ENCODE measurements at regions of chr1 and their contacts with region 1.

Region 1: GRCh38 chr1:37434292-37434907 is 40.0 kb upstream of the ZC3H12A start:
- DNase-seq: peak; percentile 66 to 85
- ATAC-seq: peak; percentile 75 to 89 (median 84)
- H3K4me3 ChIP-seq: no peak overlapping the region
- H3K27ac ChIP-seq: no peak overlapping the region
- H3K4me1 ChIP-seq: no peaks in the 10 kb centered on the region
- H3K27me3 ChIP-seq: peaks cover under 1 to 38% (median 2%) of the 10 kb centered on the region in 3 donors
- CTCF ChIP-seq: peak; percentile 89

Region 2: GRCh38 chr1:36557041-36558000 is 877.1 kb before region 1 on chr1:
- intact Hi-C with region 1: loop called in 1 of 2 experiments (anchors 5 kb)
- DNase-seq: no peak
- ATAC-seq: no peak
- H3K4me3 ChIP-seq: no peak overlapping the region
- H3K27ac ChIP-seq: no peak overlapping the region
- H3K4me1 ChIP-seq: no peaks in the 10 kb centered on the region
- H3K27me3 ChIP-seq: peaks cover 4 to 30% (median 4%) of the 10 kb centered on the region in 3 donors
- CTCF ChIP-seq: no peak

Region 3: GRCh38 chr1:36576118-36576517 is 858.3 kb before region 1 on chr1:
- intact Hi-C with region 1: loop called (anchors 1 to 10 kb)
- DNase-seq: peak; percentile 32 to 64
- ATAC-seq: peak in 3 of 4 donors; percentile 57 to 78 (median 67)
- H3K4me3 ChIP-seq: no peak overlapping the region
- H3K27ac ChIP-seq: no peak overlapping the region
- H3K4me1 ChIP-seq: no peaks in the 10 kb centered on the region
- H3K27me3 ChIP-seq: peaks cover 0 to 44% (median 9%) of the 10 kb centered on the region in 3 donors
- CTCF ChIP-seq: peak; percentile 52

Region 4: DNA sequence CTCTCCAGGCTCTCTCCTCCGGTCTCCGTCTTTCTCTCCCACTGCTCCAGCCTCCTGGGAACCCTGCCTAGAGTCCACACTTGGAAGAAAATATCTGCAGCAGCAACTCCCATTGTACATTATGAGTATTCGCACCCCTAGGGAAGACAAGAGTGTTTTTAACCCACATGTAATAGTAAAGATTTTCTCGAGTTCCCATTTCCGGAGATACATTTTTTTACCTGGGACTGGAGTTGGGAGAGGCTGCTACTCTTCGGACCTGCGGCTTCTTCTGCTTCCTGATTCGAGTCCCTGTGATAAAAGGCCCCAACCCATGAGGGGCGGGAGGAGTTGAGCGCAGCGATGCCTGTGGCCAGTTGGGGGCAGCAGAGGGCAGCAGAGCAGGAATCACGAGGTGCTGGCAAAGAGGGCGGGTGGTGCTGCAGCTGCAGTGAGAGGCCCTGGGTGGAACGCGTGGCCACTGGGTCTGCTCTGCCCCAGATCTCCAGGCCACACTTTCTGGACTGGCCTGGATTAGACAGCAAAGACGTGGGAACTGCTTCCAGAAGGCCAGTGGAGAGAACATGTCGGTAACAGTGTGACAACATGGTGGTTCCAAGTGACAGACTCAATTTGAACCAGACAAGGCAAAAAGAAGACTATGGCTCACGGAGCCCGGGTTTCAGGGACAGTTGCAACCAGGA is 730.7 kb before region 1 on chr1:
- intact Hi-C with region 1: loop called (anchors 5 kb)
- DNase-seq: peak; percentile 68 to 83
- ATAC-seq: peak; percentile 68 to 86 (median 84)
- H3K4me3 ChIP-seq: no peak overlapping the region
- H3K27ac ChIP-seq: no peak overlapping the region
- H3K4me1 ChIP-seq: no peaks in the 10 kb centered on the region
- H3K27me3 ChIP-seq: peaks cover 0 to 31% (median 3%) of the 10 kb centered on the region in 3 donors
- CTCF ChIP-seq: peak; percentile 59

Region 5: DNA sequence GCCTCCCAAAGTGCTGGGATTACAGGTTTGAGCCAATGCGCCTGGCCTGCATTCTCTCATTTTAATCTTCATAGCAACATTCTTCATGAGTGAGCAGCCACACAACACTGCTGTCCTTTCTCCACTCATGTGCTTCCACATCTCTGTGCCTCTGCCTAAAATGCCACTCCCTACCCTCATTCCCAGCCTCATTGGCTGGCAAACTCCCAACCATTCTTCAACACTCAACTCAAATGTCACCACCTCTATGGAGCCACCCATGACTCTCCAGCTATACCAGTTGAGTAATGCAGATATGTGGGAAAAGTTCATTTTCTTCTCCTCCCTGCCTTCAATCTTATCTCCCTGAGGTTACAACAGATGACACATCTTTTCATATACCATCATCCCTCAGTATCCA is 13.9 kb before region 1 on chr1:
- intact Hi-C with region 1: no loop called
- DNase-seq: no peak
- ATAC-seq: no peak
- H3K4me3 ChIP-seq: no peak overlapping the region
- H3K27ac ChIP-seq: no peak overlapping the region
- H3K4me1 ChIP-seq: no peaks in the 10 kb centered on the region
- H3K27me3 ChIP-seq: peaks cover 0 to 22% (median 7%) of the 10 kb centered on the region in 3 donors
- CTCF ChIP-seq: no peak

Region 6: GRCh38 chr1:37449936-37450335 is 15.5 kb after region 1 on chr1:
- intact Hi-C with region 1: no loop called
- DNase-seq: no peak
- ATAC-seq: no peak
- H3K4me3 ChIP-seq: no peak overlapping the region
- H3K27ac ChIP-seq: no peak overlapping the region
- H3K4me1 ChIP-seq: no peaks in the 10 kb centered on the region
- H3K27me3 ChIP-seq: peaks cover 0 to 37% (median 6%) of the 10 kb centered on the region in 3 donors
- CTCF ChIP-seq: no peak